ENCODE measurements at regions of chr5 and their contacts with region 1.

Region 1: GRCh38 chr5:126837906-126838539 is 61.1 kb downstream of the LMNB1 start:
- DNase-seq: peak in 3 of 14 experiments; percentile 18 to 48 (median 44)
- ATAC-seq: peak; percentile 51
- H3K4me3 ChIP-seq: no peak overlapping the region
- H3K4me3 Mint-ChIP-seq: no peak overlapping the region
- H3K27ac ChIP-seq: no peak overlapping the region
- H3K27ac Mint-ChIP-seq: no peak overlapping the region
- H3K4me1 ChIP-seq: no peaks in the 10 kb centered on the region
- H3K4me1 Mint-ChIP-seq: no peaks in the 10 kb centered on the region
- H3K27me3 ChIP-seq: no peaks in the 10 kb centered on the region
- H3K27me3 Mint-ChIP-seq: no peaks in the 10 kb centered on the region
- CTCF ChIP-seq: peak; percentile 59

Region 2: DNA sequence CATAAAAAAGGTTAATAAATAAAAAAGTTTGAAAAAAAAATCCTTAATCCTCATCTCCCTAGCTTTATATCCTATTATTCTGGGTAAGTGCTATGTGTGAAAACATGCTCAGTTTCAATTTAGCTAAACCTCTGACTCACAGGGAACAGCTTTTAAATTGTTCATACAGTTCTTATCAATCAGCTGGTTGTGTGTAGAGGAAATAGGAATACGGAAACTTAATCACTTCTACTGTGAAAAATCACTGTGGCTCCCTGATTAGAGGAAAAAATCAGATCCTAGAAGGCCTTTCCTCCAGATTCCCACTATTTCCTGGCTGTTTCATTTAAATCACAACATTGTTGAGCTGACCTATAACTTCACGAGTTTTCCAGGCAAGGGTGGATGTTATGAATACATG is 71.8 kb after region 1 on chr5:
- CTCF ChIA-PET with region 1: no interaction called
- POLR2A ChIA-PET with region 1: no interaction called
- intact Hi-C with region 1: no loop called
- DNase-seq: no peak
- ATAC-seq: no peak
- H3K4me3 ChIP-seq: no peak overlapping the region
- H3K4me3 Mint-ChIP-seq: no peak overlapping the region
- H3K27ac ChIP-seq: no peak overlapping the region
- H3K27ac Mint-ChIP-seq: no peak overlapping the region
- H3K4me1 ChIP-seq: no peaks in the 10 kb centered on the region
- H3K4me1 Mint-ChIP-seq: no peaks in the 10 kb centered on the region
- H3K27me3 ChIP-seq: no peaks in the 10 kb centered on the region
- H3K27me3 Mint-ChIP-seq: no peaks in the 10 kb centered on the region
- CTCF ChIP-seq: no peak

Region 3: GRCh38 chr5:127040796-127041520 is 202.9 kb after region 1 on chr5:
- CTCF ChIA-PET with region 1: no interaction called
- POLR2A ChIA-PET with region 1: no interaction called
- intact Hi-C with region 1: loop called in 1 of 2 experiments (anchors 5 kb)
- DNase-seq: no peak
- ATAC-seq: no peak
- H3K4me3 ChIP-seq: no peak overlapping the region
- H3K4me3 Mint-ChIP-seq: no peak overlapping the region
- H3K27ac ChIP-seq: no peak overlapping the region
- H3K27ac Mint-ChIP-seq: no peak overlapping the region
- H3K4me1 ChIP-seq: no peaks in the 10 kb centered on the region
- H3K4me1 Mint-ChIP-seq: no peaks in the 10 kb centered on the region
- H3K27me3 ChIP-seq: no peaks in the 10 kb centered on the region
- H3K27me3 Mint-ChIP-seq: no peaks in the 10 kb centered on the region
- CTCF ChIP-seq: no peak

Region 4: DNA sequence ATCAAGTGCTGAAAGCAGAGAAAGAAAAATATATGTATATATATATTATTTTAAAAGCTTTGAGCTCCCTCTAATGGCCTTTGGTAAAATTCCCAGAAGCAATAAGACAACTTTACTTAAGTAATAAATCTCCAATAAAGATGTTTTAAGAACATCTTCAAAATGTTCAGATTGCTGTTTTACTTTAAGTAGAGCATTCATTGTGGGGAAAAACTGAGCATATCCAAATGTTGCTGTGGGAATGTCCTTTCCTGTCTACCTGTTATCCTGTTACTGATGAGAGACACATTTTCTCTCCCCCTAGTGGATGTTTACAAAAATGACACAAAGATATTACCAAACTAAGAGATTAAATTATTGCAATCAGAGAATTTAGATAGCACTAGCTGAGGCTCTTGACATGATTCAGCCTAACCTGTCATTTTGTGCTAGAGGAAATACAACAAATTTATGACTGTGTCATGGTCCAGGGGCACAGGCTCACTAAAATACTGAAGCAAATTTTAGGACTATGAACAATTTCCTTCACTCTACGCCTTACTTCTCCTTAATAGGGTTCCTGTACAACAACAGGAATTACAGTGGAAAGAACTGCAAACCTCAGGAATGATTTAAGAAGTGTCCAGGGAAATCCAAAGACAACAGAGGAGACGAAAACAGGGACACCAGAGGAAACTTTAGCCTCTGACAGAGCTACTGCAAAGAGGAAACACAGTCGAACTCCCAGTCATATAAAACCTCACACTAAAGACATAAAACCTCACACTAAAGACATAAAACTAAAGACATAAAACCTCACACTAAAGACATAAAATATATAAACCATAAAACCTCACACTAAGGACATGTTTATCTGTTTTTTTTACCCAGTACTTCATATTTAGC is 655.1 kb after region 1 on chr5:
- CTCF ChIA-PET with region 1: no interaction called
- POLR2A ChIA-PET with region 1: no interaction called
- intact Hi-C with region 1: loop called (anchors 2 to 5 kb)
- DNase-seq: peak in 3 of 14 experiments; percentile 35 to 52 (median 52)
- ATAC-seq: peak; percentile 71
- H3K4me3 ChIP-seq: no peak overlapping the region
- H3K4me3 Mint-ChIP-seq: no peak overlapping the region
- H3K27ac ChIP-seq: no peak overlapping the region
- H3K27ac Mint-ChIP-seq: no peak overlapping the region
- H3K4me1 ChIP-seq: no peaks in the 10 kb centered on the region
- H3K4me1 Mint-ChIP-seq: no peaks in the 10 kb centered on the region
- H3K27me3 ChIP-seq: peaks cover 6 to 10% of the 10 kb centered on the region in 2 experiments
- H3K27me3 Mint-ChIP-seq: peaks cover 31% of the 10 kb centered on the region
- CTCF ChIP-seq: peak; percentile 99

Measured in CD4-positive, alpha-beta T cell (primary cell).